ENCODE measurements at regions of chr6 and their contacts with region 1.

Region 1: GRCh38 chr6:109130065-109130464 is 34.8 kb downstream of the CEP57L1 start:
- DNase-seq: no peak
- ATAC-seq: no peak
- H3K4me3 Mint-ChIP-seq: no peak overlapping the region
- H3K27ac Mint-ChIP-seq: no peak overlapping the region
- H3K4me1 Mint-ChIP-seq: peaks cover 3% of the 10 kb centered on the region
- H3K27me3 Mint-ChIP-seq: no peaks in the 10 kb centered on the region

Region 2: DNA sequence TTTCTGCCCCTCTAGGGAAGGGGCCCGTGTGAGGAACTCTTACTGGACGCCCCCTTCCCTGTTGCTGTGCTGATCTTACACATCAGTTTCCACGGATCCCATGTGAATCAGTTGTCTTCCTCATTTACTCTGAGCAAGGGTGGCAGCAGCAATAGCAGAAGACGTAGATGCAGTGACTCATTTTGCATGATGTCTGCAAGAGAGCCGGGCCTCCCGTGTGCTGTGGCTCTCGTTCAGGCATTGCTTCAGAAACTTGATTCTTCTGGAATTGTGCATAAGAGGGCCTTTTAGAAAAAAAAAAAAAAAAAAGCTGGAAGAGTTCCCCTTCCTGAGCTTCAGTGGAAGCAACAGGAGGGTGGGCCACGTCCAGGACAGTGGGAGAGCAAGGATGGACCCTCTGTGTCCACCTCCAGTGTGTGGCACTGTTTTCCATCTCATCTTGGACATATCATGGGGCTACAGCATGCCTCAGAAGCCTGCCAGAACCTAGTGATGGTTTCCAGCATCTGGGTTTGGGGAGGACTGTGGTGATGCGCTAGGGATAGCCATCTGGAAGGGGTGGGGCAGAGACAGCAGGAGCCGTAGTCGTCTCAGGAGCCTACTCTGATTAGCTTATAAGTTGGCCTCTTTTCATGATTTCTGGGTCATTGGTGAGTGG is 507.3 kb before region 1 on chr6:
- CTCF ChIA-PET with region 1: no interaction called
- POLR2A ChIA-PET with region 1: no interaction called
- intact Hi-C with region 1: no loop called
- DNase-seq: no peak
- ATAC-seq: no peak
- H3K4me3 Mint-ChIP-seq: no peak overlapping the region
- H3K27ac Mint-ChIP-seq: no peak overlapping the region
- H3K4me1 Mint-ChIP-seq: peaks cover 54% of the 10 kb centered on the region
- H3K27me3 Mint-ChIP-seq: no peaks in the 10 kb centered on the region

Region 3: GRCh38 chr6:109117346-109118035 is 12.6 kb before region 1 on chr6:
- CTCF ChIA-PET with region 1: no interaction called
- POLR2A ChIA-PET with region 1: no interaction called
- intact Hi-C with region 1: loop called in 1 of 2 experiments (anchors 1 kb)
- DNase-seq: no peak
- ATAC-seq: no peak
- H3K4me3 Mint-ChIP-seq: no peak overlapping the region
- H3K27ac Mint-ChIP-seq: no peak overlapping the region
- H3K4me1 Mint-ChIP-seq: peaks cover 22% of the 10 kb centered on the region
- H3K27me3 Mint-ChIP-seq: no peaks in the 10 kb centered on the region

Region 4: GRCh38 chr6:109304284-109305015 is 174.4 kb after region 1 on chr6:
- CTCF ChIA-PET with region 1: no interaction called
- POLR2A ChIA-PET with region 1: no interaction called
- intact Hi-C with region 1: no loop called
- DNase-seq: peak; percentile 40
- ATAC-seq: peak; percentile 59
- H3K4me3 Mint-ChIP-seq: no peak overlapping the region
- H3K27ac Mint-ChIP-seq: peak overlapping the region; percentile 47
- H3K4me1 Mint-ChIP-seq: peaks cover 35% of the 10 kb centered on the region
- H3K27me3 Mint-ChIP-seq: no peaks in the 10 kb centered on the region